ENCODE measurements at regions of chr22 and their contacts with region 1.

Region 1: GRCh38 chr22:41096841-41097240 is 4.4 kb downstream of the EP300 start:
- DNase-seq: no peak
- H3K4me3 ChIP-seq: peak overlapping the region; percentile 5
- H3K27ac ChIP-seq: no peak overlapping the region
- H3K4me1 ChIP-seq: peaks cover 95% of the 10 kb centered on the region
- H3K27me3 ChIP-seq: no peaks in the 10 kb centered on the region
- CTCF ChIP-seq: no peak

Region 2: DNA sequence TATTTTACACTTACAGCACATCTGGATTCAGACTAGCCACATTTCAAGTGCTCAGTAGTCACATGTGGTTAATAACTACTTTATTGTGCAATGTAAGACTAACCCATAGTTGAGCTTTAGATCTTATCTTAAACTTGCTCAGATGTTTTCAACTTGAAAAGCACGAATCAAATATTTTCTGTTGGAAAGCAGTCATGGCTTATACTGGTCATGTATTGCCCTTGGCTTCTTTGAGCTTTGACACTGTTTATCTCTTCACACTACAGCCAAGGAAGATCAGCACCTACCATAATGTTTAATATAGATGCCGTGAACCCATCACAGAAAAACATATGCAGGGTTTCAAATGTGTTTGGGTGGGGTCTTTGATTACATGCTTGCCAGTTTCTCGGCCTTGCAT is 141.3 kb before region 1 on chr22:
- intact Hi-C with region 1: loop called (anchors 2 kb)
- DNase-seq: no peak
- H3K4me3 ChIP-seq: no peak overlapping the region
- H3K27ac ChIP-seq: no peak overlapping the region
- H3K4me1 ChIP-seq: peaks cover 52% of the 10 kb centered on the region
- H3K27me3 ChIP-seq: no peaks in the 10 kb centered on the region
- CTCF ChIP-seq: no peak

Region 3: GRCh38 chr22:41038732-41039445 is 58.0 kb before region 1 on chr22:
- intact Hi-C with region 1: no loop called
- DNase-seq: no peak
- H3K4me3 ChIP-seq: no peak overlapping the region
- H3K27ac ChIP-seq: no peak overlapping the region
- H3K4me1 ChIP-seq: no peaks in the 10 kb centered on the region
- H3K27me3 ChIP-seq: peaks cover 11% of the 10 kb centered on the region
- CTCF ChIP-seq: no peak

Region 4: GRCh38 chr22:41442240-41442792 is 345.5 kb after region 1 on chr22:
- intact Hi-C with region 1: no loop called
- DNase-seq: no peak
- H3K4me3 ChIP-seq: peak overlapping the region; percentile 100
- H3K27ac ChIP-seq: peak overlapping the region; percentile 100
- H3K4me1 ChIP-seq: peaks cover 98% of the 10 kb centered on the region
- H3K27me3 ChIP-seq: no peaks in the 10 kb centered on the region
- CTCF ChIP-seq: no peak